Endothelial cell of umbilical vein (primary cell): ENCODE measurements at regions of chr4 and their contacts with region 1.

Region 1: DNA sequence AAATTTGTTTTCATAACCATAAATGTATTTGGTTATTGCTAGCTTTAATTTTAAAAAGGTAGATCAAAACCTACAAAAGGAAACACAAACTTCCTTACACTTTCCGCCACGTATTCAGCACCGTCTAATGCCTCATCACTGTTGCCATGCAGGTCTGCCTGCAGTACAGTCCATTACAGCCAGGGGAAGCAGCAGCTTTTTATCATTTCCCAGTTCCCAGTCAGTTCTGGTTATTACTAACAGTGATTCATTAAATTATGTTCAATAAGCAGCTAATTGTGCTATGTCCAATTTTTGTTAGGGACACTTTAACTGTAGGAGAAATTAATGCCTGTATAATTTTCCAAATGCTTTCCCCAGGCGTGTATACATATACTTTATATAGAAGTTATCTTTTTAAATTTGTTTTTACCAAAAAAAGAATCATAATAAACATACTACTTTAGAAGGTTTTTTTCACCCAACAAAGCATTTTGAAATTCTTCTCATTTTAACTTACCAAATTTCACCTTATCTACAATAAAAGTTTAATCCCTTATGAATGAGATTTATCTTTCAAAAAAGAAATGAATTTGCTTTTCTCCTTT is 93.3 kb downstream of the ANXA3 start:
- DNase-seq: peak; percentile 90
- H3K4me3 ChIP-seq: peak overlapping the region in 1 of 3 experiments; percentile 61
- H3K27ac ChIP-seq: peak overlapping the region; percentile 92
- H3K4me1 ChIP-seq: peaks cover 41% of the 10 kb centered on the region
- H3K27me3 ChIP-seq: no peaks in the 10 kb centered on the region
- CTCF ChIP-seq: peak; percentile 79 to 86
- POLR2A ChIP-seq: no peak

Region 2: GRCh38 chr4:78551479-78552351 is 93.1 kb before region 1 on chr4 and contains the start of gene ANXA3:
- CTCF ChIA-PET with region 1: no interaction called
- POLR2A ChIA-PET with region 1: no interaction called
- dilution Hi-C with region 1: no loop called
- intact Hi-C with region 1: loop called (anchors 2 kb)
- DNase-seq: peak; percentile 39
- H3K4me3 ChIP-seq: peak within 1 kb of the TSS; percentile 38 to 89 (median 63)
- H3K27ac ChIP-seq: peak within 1 kb of the TSS; percentile 98
- H3K4me1 ChIP-seq: peaks cover 26% of the 10 kb centered on the region
- H3K27me3 ChIP-seq: no peaks in the 10 kb centered on the region
- CTCF ChIP-seq: peak in 1 of 2 donors; percentile 4
- POLR2A ChIP-seq: peak; percentile 63
- total RNA-seq, gene ANXA3: 73.8 and 78.4 TPM in 2 replicates

Region 3: DNA sequence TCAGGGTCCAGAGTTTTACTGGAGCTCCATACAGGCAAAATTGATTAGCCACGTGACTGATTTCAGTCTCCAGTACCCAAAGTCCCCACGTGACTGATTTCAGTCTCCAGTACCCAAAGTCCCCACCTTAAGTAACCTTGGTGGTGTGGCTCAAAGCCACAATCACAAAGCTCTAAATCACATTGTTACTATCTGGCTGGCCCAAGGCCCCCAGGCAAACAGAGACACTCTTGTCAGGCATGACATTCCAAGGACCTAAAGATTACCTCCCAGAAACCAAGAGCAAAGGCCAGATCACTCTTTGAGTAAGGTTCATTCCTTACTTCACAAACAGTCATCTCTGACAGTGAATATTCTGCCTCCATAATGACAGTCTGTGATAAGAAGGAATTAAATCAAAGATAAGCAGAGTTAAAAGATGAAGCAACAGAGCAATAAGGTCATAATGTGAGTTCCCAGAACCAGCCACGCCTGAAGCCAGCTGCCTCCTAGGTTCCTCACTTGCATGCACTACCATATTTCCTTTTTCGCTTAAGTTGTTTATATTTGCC is 14.8 kb before region 1 on chr4:
- CTCF ChIA-PET with region 1: interaction called, 11 read pairs
- POLR2A ChIA-PET with region 1: interaction called, 3 read pairs
- dilution Hi-C with region 1: no loop called
- intact Hi-C with region 1: no loop called
- DNase-seq: no peak
- H3K4me3 ChIP-seq: no peak overlapping the region
- H3K27ac ChIP-seq: no peak overlapping the region
- H3K4me1 ChIP-seq: no peaks in the 10 kb centered on the region
- H3K27me3 ChIP-seq: no peaks in the 10 kb centered on the region
- CTCF ChIP-seq: no peak
- POLR2A ChIP-seq: no peak

Region 4: GRCh38 chr4:78661921-78662521 is 17.2 kb after region 1 on chr4:
- CTCF ChIA-PET with region 1: interaction called, 75 read pairs
- POLR2A ChIA-PET with region 1: interaction called, 6 read pairs
- dilution Hi-C with region 1: no loop called
- intact Hi-C with region 1: loop called (anchors 1 kb)
- DNase-seq: peak; percentile 81
- H3K4me3 ChIP-seq: peak overlapping the region in 1 of 3 experiments; percentile 10
- H3K27ac ChIP-seq: peak overlapping the region; percentile 72
- H3K4me1 ChIP-seq: peaks cover 65% of the 10 kb centered on the region
- H3K27me3 ChIP-seq: no peaks in the 10 kb centered on the region
- CTCF ChIP-seq: no peak
- POLR2A ChIP-seq: no peak

Region 5: DNA sequence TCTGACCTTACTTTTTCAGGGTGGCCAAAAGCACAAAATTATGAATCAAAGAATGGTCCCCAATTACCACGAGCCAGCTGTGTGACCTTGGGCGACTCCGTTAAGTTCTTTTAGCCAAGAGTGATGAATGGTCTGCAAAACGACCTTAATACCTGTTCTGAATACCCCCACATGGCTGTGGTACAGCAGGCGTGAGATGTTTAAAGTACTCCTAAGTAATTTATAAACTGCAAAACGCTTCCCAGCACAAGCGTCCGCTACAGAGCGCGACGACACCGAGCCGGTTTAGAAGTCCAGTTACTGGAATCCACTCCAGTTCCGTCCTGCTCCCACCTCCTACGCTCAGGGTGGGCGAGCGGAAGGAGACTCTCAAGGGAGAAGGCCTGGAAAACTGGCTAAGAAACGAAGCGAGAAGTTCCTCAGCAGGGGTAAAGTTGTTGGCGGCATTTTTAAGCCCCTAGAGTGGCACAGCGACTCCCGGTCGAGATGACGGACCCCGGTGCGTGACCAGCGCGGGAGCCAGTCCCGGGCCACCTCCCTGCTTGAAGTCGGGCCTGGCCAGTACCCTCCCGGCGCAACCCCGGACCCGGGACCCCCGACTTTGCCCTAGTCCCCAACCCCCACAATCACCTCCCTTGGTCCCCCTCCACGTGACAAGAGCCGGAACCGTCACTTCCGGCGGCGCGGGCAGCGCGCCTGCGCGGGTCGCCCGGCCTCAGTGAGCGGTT is 130.6 kb after region 1 on chr4:
- CTCF ChIA-PET with region 1: interaction called, 28 read pairs
- POLR2A ChIA-PET with region 1: interaction called, 6 read pairs
- dilution Hi-C with region 1: no loop called
- intact Hi-C with region 1: loop called (anchors 1 kb)
- DNase-seq: peak; percentile 77
- H3K4me3 ChIP-seq: peak overlapping the region; percentile 77 to 91 (median 88)
- H3K27ac ChIP-seq: peak overlapping the region; percentile 97
- H3K4me1 ChIP-seq: peaks cover 24% of the 10 kb centered on the region
- H3K27me3 ChIP-seq: no peaks in the 10 kb centered on the region
- CTCF ChIP-seq: no peak
- POLR2A ChIP-seq: peak; percentile 82

Region 6: GRCh38 chr4:78971326-78971725 is 326.5 kb after region 1 on chr4:
- CTCF ChIA-PET with region 1: no interaction called
- POLR2A ChIA-PET with region 1: no interaction called
- dilution Hi-C with region 1: no loop called
- intact Hi-C with region 1: no loop called
- DNase-seq: no peak
- H3K4me3 ChIP-seq: no peak overlapping the region
- H3K27ac ChIP-seq: no peak overlapping the region
- H3K4me1 ChIP-seq: no peaks in the 10 kb centered on the region
- H3K27me3 ChIP-seq: peaks cover 4% of the 10 kb centered on the region in 2 experiments
- CTCF ChIP-seq: no peak
- POLR2A ChIP-seq: no peak